Activated naive CD8-positive, alpha-beta T cell treated with anti-CD3 and anti-CD28 coated beads, Interleukin-2, amount 10 ng/mL, durations not matched to agents 7 days and 5 days (primary cell): ENCODE measurements at regions of chr19 and their contacts with region 1.

Region 1: DNA sequence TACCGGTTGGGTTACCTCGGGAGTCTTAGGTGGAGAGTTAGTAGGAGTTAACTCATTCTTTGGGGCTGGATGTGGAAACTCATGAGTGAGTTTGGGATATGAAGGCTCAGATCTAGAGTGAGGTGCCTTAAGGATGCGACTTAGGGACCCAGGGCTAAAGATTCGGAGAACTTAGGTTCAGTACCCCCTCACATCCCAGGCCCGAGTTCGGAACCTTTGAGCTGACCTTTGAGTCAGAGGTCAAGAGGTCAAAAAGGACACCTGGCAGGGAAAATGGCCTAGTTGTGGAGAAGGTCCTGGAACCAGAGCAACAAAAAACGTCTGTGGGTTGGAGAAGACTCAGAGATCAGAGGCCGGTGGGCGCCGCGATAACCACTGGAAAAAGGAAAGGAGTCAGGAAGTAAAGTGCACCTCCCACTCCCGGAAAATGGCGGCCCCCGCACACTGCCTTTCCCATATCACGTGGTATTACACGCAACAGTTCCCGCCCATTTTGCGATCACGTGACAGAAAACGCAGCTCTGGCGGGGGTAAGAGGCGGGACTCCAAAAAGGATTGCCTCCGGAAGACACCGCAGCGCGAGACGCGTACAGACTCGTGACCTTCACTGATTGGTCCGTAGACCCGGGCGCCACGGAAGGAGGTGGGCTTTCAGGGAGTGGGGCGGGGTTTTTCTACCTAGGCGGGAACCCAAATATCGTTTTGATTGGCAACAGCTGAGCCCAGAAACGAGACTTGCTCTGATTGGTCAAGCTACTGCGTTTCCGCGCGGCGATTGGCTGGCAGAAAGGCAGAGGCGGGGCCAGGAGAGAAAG is at the start of gene ACTMAP:
- DNase-seq: peak; percentile 97
- ATAC-seq: peak; percentile 89
- H3K4me3 Mint-ChIP-seq: peak within 1 kb of the TSS; percentile 97
- H3K27ac Mint-ChIP-seq: peak within 1 kb of the TSS; percentile 99
- H3K4me1 Mint-ChIP-seq: peaks cover 37% of the 10 kb centered on the region
- H3K27me3 Mint-ChIP-seq: no peaks in the 10 kb centered on the region
- total RNA-seq, gene ACTMAP: 13.5 to 15.6 TPM

Region 2: DNA sequence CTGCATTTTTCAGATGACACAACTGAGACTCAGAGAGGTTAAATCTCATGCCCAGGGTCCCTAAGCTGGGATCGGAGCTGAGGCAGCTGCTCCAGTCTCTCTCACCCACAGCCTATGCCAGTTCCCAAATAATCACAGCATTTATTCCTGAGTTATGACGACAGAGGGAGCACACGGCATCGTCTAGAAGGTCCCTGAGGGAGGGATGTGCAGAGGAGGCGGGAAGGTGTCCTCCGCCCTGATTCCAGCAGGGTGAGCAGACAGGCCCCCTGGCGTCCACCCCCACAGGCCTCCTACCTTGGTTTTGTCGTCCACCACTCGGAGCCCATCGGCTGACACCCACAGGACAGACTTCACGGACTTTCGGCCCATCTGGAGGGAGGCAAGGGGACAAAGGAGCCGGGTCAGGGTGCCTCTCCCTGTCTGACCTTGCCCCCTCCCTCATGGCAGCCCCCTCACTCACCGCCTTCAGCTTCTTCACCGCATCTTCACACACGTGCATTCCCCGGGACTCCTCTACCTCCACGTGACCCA is 67.8 kb before region 1 on chr19:
- POLR2A ChIA-PET with region 1: no interaction called
- DNase-seq: no peak
- ATAC-seq: no peak
- H3K4me3 Mint-ChIP-seq: no peak overlapping the region
- H3K27ac Mint-ChIP-seq: no peak overlapping the region
- H3K4me1 Mint-ChIP-seq: peaks cover 1% of the 10 kb centered on the region
- H3K27me3 Mint-ChIP-seq: no peaks in the 10 kb centered on the region

Region 3: GRCh38 chr19:40716655-40717324 is 33.5 kb before region 1 on chr19 and contains the starts of genes COQ8B and ITPKC:
- POLR2A ChIA-PET with region 1: interaction called, 11 read pairs
- DNase-seq: peak; percentile 100
- ATAC-seq: peak; percentile 65
- H3K4me3 Mint-ChIP-seq: peak within 1 kb of the TSS; percentile 90
- H3K27ac Mint-ChIP-seq: peak within 1 kb of the TSS; percentile 92
- H3K4me1 Mint-ChIP-seq: peaks cover 49% of the 10 kb centered on the region
- H3K27me3 Mint-ChIP-seq: no peaks in the 10 kb centered on the region
- total RNA-seq, gene COQ8B: 35.8 to 36.8 TPM
- total RNA-seq, gene ITPKC: 7.1 TPM

Region 4: GRCh38 chr19:40733149-40733548 is 17.1 kb before region 1 on chr19:
- POLR2A ChIA-PET with region 1: no interaction called
- DNase-seq: no peak
- ATAC-seq: no peak
- H3K4me3 Mint-ChIP-seq: no peak overlapping the region
- H3K27ac Mint-ChIP-seq: no peak overlapping the region
- H3K4me1 Mint-ChIP-seq: no peaks in the 10 kb centered on the region
- H3K27me3 Mint-ChIP-seq: no peaks in the 10 kb centered on the region

Region 5: DNA sequence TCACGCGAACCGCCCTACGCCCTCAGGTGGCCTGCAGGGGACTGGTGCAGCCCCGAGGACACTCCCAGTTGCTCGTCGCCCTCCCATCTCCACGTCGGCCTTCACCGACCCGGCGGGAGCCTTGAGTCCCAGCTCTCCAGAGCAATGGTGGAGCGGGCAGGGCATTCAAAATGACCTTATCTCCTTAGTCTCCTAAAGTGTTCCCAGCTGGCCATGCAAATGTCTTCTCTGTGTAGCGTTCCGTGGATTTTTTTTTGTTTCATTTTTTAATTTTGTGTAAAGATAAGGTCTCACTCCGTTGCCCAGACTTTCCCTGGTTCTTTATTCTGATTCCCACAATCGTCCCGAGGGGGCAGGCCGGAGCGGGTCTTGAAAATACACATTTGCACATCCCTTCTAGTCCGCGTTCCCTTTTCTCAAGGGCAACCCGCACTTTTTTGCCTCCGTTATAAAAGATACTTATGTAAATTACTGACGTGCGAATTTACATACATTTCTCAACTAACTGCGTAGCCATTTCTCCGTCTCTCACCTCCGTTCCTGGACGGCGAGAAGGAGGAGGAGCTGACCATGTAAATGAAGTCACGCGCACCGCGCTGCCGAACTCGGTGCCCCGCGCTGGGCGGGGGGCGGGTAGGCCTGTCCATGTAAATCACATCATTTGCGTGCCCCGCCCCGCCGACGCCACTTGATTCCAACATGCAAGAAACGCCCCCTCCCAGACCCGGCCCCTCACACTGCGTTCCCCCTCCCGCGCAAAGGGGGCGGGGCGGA is 48.1 kb after region 1 on chr19:
- POLR2A ChIA-PET with region 1: interaction called, 25 read pairs
- DNase-seq: peak; percentile 72
- ATAC-seq: peak; percentile 78
- H3K4me3 Mint-ChIP-seq: peak overlapping the region; percentile 93
- H3K27ac Mint-ChIP-seq: peak overlapping the region; percentile 97
- H3K4me1 Mint-ChIP-seq: peaks cover 38% of the 10 kb centered on the region
- H3K27me3 Mint-ChIP-seq: no peaks in the 10 kb centered on the region

Region 6: DNA sequence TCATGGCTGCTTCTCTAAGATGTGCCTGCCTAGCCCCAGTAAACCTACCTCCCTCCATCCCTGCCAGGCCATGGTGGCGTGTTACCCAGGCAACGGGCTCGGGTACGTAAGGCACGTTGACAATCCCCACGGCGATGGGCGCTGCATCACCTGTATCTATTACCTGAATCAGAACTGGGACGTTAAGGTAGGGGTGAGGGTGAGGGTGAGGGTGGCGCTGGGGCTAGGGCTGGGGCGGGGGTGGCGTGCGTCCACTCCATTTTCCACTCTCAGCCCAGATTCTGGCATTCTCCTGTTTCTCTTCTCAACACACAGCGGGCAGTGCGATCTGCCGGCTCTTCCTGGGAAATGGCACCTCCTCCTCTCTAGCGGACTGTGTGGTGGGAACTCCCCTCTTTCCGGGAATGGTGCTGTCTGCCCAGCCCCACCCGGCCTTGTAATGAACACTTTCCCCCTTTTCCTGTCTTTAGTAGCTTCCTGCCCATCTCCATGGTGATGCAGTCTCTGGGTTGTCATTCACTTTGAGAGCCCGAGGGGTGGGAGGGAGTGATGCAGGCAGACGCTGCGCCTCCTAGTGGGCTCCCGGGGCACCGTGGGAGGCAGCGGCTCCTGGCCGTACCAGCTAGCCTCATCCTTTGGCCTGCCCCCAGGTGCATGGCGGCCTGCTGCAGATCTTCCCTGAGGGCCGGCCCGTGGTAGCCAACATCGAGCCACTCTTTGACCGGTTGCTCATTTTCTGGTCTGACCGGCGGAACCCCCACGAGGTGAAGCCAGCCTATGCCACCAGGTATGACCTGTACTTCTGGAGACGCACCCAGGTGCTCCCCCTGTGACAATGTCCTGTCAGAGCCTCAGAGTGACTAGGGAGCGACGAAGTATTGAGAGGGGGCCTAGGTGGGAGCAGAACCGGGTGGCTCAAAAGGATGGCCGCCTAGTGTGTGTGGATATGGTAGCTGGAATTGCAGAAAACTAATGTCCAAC is 56.5 kb after region 1 on chr19:
- POLR2A ChIA-PET with region 1: interaction called, 25 read pairs
- DNase-seq: peak; percentile 84
- ATAC-seq: peak; percentile 40
- H3K4me3 Mint-ChIP-seq: peak overlapping the region; percentile 98
- H3K27ac Mint-ChIP-seq: peak overlapping the region; percentile 93
- H3K4me1 Mint-ChIP-seq: peaks cover 72% of the 10 kb centered on the region
- H3K27me3 Mint-ChIP-seq: peaks cover 4% of the 10 kb centered on the region

Region 7: GRCh38 chr19:40836754-40837429 is 86.6 kb after region 1 on chr19:
- POLR2A ChIA-PET with region 1: no interaction called
- DNase-seq: no peak
- ATAC-seq: no peak
- H3K4me3 Mint-ChIP-seq: no peak overlapping the region
- H3K27ac Mint-ChIP-seq: no peak overlapping the region
- H3K4me1 Mint-ChIP-seq: peaks cover 14% of the 10 kb centered on the region
- H3K27me3 Mint-ChIP-seq: peaks cover 31% of the 10 kb centered on the region